Esophagus muscularis mucosa (tissue), 4 donors: ENCODE measurements at regions of chr5 and their contacts with region 1.

Region 1: DNA sequence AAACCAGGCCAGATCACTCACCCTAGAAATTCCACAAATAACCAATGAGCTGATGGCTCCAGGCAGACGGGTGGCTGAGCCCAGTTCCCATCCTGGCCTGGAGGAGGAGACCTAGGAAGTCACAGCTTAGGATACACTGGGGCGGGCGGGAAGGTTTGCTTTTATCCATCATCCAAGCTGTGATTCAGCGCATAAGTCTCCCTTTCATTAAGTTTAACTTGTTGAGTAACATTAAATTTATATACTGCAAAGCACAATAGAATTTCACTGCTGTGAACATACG is 55.7 kb downstream of the THBS4 start:
- DNase-seq: no peak
- H3K4me3 ChIP-seq: no peak overlapping the region
- H3K27ac ChIP-seq: no peak overlapping the region
- H3K4me1 ChIP-seq: peaks cover 0 to 8% (median 1%) of the 10 kb centered on the region in 4 donors
- H3K27me3 ChIP-seq: no peaks in the 10 kb centered on the region
- CTCF ChIP-seq: no peak
- EP300 ChIP-seq: no peak
- POLR2A ChIP-seq: no peak

Region 2: DNA sequence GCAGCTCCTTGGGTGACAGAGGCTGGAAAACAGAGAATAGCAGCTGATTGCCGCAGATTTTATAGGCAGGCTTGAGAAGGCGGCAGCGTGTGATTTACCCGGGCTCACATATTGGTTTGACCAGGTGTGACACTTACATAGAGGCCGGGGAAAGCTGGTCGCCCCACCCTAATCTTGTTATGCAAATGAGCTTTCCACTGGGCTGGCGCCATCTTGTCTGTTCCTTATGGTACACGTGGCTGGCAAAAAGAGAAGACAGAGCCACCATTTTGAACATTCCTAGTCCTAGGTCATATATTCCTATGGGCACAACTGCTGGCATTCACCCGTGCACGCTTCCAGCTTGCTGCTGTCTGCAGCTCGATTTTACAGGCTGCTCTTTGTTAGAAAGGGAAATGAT is 217.7 kb after region 1 on chr5:
- intact Hi-C with region 1: loop called (anchors 1 kb)
- DNase-seq: no peak
- H3K4me3 ChIP-seq: no peak overlapping the region
- H3K27ac ChIP-seq: no peak overlapping the region
- H3K4me1 ChIP-seq: no peaks in the 10 kb centered on the region
- H3K27me3 ChIP-seq: no peaks in the 10 kb centered on the region
- CTCF ChIP-seq: no peak
- EP300 ChIP-seq: no peak
- POLR2A ChIP-seq: no peak